ENCODE measurements at regions of chr9 and their contacts with region 1.

Region 1: DNA sequence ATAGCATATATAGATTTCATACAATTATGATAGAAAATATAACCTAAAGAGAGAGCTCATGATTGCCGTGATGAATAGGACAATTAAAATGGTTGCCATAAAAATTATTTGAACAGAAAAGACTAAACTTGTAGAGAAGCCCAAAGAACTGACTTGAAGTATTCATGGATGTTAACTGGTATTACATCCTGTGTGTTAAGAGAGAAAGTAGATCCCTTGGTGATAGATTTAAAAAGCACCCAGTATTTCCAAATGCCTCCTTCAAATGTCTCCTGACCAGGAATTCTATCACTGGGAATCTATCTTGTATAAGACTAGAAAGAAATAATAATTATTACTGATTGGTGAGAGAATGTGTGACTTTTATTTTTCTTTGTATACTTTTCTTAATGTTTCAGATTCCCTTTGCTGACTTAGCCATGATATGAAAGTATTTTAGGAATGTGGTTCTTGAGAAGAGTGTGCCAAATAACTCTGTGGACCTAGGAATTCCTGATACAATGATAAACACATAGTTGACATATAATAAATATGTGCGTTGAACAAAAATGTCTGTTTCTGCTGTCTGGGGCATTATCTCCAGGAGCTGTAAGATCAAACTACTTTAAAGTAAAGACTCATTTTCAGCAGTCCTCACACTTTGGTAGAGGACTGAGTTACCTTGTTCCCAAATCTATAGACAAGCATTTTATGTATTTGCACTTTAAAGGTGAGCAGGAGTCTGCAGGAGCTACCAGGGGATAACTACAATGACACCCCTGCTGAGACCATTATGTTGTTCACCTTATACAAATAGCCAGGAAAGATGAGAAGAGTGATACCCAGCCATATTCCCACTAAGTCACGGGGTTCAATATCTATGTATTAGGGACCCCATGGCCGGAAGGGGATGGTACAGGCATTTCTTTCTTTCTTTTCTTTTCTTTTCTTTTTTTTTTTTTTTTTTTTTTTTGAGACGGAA is 211.1 kb upstream of the TLE4 start:
- DNase-seq: peak in 1 of 2 experiments; percentile 46
- H3K4me3 ChIP-seq: peak overlapping the region in 1 of 4 experiments; percentile 20; a peak in 1 of 8 replicates
- H3K27ac ChIP-seq: no peak overlapping the region
- H3K4me1 ChIP-seq: peaks cover 2 to 11% (median 6%) of the 10 kb centered on the region in 4 experiments; a peak in 4 of 7 replicates
- H3K27me3 ChIP-seq: peaks cover 0 to 2% (median 0%) of the 10 kb centered on the region in 4 experiments; a peak in 1 of 7 replicates
- CTCF ChIP-seq: no peak
- EP300 ChIP-seq: peak in 1 of 2 experiments; percentile 37; a peak in 1 of 3 replicates
- POLR2A ChIP-seq: no peak
- RAD21 ChIP-seq: no peak

Region 2: GRCh38 chr9:79432485-79432884 is 71.8 kb after region 1 on chr9:
- CTCF ChIA-PET with region 1: interaction called, 11 read pairs
- POLR2A ChIA-PET with region 1: no interaction called
- DNase-seq: no peak
- H3K4me3 ChIP-seq: no peak overlapping the region
- H3K27ac ChIP-seq: no peak overlapping the region
- H3K4me1 ChIP-seq: no peaks in the 10 kb centered on the region
- H3K27me3 ChIP-seq: no peaks in the 10 kb centered on the region
- CTCF ChIP-seq: peak in 1 of 3 experiments; percentile 35; a peak in 1 of 4 replicates
- EP300 ChIP-seq: no peak
- POLR2A ChIP-seq: no peak
- RAD21 ChIP-seq: peak; percentile 9 to 10; a peak in 1 of 4 replicates

Measured in H1 (cell line).